Upper lobe of right lung (tissue), 1 donor: ENCODE measurements at regions of chr7 and their contacts with region 1.

Region 1: GRCh38 chr7:3154912-3155494 is 111.3 kb upstream of the CARD11 start:
- DNase-seq: peak; percentile 19
- ATAC-seq: peak; percentile 73
- H3K4me3 ChIP-seq: no peak overlapping the region
- H3K27ac ChIP-seq: no peak overlapping the region
- H3K4me1 ChIP-seq: no peaks in the 10 kb centered on the region
- H3K27me3 ChIP-seq: peaks cover 6% of the 10 kb centered on the region
- CTCF ChIP-seq: peak; percentile 69

Region 2: DNA sequence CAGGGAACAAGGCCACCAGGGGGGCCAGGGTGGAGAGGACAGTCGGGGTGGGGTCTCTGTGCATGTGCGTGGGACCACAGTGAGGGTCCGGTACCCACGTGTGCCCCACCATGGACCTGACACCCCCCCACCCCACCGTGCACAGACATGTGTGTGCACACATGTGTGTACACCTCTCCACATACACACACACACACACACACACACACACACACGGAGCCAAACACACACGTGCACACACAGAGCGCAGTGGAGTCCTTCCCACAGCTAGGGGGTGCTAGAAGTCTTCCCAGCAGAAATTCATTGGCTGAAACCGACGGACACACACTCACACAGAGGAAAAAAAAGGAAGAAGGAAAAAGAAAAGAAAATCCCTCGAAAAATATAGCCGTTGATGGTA is 268.1 kb before region 1 on chr7:
- intact Hi-C with region 1: loop called (anchors 10 kb)
- DNase-seq: no peak
- ATAC-seq: peak; percentile 87
- H3K4me3 ChIP-seq: no peak overlapping the region
- H3K27ac ChIP-seq: no peak overlapping the region
- H3K4me1 ChIP-seq: no peaks in the 10 kb centered on the region
- H3K27me3 ChIP-seq: no peaks in the 10 kb centered on the region
- CTCF ChIP-seq: peak; percentile 57

Region 3: DNA sequence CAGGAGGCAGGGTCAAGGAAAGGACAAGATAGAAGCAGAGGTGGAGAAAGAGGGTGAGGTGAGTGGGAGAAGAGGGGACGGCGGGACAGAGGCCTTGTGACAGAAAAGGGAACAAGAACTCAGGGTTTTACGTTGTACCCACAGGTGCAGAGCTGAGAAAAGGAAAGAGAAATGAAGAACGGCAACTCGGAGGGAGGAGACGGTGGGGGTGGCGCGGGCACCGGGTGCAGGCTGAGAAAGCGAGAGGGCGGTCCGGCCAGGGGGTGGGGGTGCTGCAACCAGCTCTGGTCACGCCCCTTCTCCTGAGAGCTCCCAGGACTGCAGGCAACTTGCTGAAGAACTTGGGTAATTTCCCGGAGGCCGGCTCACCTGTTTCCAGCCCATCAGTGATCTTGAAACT is 176.6 kb before region 1 on chr7:
- intact Hi-C with region 1: no loop called
- DNase-seq: peak; percentile 89
- ATAC-seq: peak; percentile 88
- H3K4me3 ChIP-seq: peak overlapping the region; percentile 23
- H3K27ac ChIP-seq: no peak overlapping the region
- H3K4me1 ChIP-seq: peaks cover 12% of the 10 kb centered on the region
- H3K27me3 ChIP-seq: no peaks in the 10 kb centered on the region
- CTCF ChIP-seq: no peak

Region 4: DNA sequence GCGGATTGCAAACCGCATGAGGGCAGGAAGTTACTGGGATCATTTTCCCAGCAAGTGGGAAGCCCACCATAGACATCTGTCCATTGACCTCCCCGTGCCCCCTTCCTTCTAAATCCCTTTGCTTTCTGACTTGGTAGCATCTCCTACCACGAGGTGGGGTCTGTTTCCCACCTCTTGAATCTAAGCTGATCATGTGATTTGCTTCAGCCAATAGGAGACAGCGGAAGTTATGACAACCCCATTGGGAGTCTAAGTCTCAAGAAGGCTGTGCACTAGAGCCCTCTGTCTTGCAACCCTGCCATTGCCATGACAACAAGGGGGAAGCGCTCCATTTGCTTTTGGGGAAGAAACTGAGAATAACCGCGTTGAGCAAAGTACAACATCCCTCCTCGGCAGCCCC is 72.2 kb before region 1 on chr7:
- intact Hi-C with region 1: no loop called
- DNase-seq: no peak
- ATAC-seq: no peak
- H3K4me3 ChIP-seq: no peak overlapping the region
- H3K27ac ChIP-seq: no peak overlapping the region
- H3K4me1 ChIP-seq: no peaks in the 10 kb centered on the region
- H3K27me3 ChIP-seq: no peaks in the 10 kb centered on the region
- CTCF ChIP-seq: no peak